CD4-positive, alpha-beta memory T cell (primary cell): ENCODE measurements at regions of chr2 and their contacts with region 1.

Region 1: GRCh38 chr2:238060542-238061314 is at the start of gene SCLY:
- DNase-seq: peak; percentile 92 to 96 (median 95)
- H3K4me3 ChIP-seq: peak within 1 kb of the TSS; percentile 76 to 95
- H3K4me3 Mint-ChIP-seq: peak within 1 kb of the TSS; percentile 85 to 97 (median 93)
- H3K27ac ChIP-seq: peak within 1 kb of the TSS; percentile 76
- H3K27ac Mint-ChIP-seq: peak within 1 kb of the TSS; percentile 87 to 97 (median 93)
- H3K4me1 ChIP-seq: peaks cover 35% of the 10 kb centered on the region
- H3K4me1 Mint-ChIP-seq: peaks cover 22 to 59% (median 38%) of the 10 kb centered on the region in 4 donors
- H3K27me3 ChIP-seq: no peaks in the 10 kb centered on the region
- H3K27me3 Mint-ChIP-seq: peaks cover 12 to 14% of the 10 kb centered on the region in 2 donors
- total RNA-seq, gene SCLY: 35.9 to 37.9 TPM

Region 2: DNA sequence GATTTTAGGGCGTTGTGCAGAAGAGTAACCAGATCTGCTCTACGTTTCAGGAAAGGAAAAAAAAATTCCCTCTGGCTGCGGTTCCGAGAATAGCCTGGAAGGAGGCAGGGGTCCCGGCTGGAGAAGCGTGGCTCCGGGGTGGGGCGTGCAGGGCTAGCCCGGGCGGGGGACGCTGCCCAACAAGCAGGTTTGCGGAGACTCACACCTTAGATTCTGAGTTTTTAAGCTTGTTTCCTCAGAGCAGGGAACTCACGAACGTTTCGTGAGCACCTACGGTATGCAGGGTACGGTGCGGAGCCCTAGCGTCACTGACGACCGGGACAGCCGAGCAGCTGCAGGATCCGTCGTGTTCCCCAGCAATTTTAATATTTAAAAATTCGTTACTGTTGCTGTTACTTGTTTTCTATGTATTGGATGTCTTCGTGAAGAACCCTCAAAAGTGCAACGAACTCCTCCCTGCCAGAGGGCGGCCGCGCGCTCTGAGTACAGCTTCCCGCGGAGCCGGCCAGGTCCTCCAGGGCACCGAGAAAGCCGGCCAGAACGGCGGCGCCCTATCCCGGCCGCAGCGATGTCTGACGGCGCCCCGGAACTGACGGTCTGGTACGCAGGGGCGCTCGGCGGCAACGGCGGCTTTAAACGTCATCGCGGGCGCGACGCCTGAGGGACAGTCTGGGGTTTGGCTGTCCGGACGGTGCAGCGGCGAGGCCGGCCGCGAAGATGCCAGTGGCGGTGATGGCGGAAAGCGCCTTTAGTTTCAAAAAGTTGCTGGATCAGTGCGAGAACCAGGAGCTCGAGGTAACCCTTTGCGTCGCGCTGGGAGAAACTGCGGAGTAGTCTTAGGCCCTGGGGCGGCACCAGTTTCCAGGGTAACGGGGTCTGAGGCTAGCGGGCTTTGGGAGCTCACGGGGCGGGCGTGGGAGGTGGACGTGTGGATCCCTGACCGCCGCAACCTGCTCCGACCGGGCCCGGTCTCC is 975.2 kb before region 1 on chr2 and contains the start of gene COPS8:
- CTCF ChIA-PET with region 1: interaction called, 3 read pairs
- POLR2A ChIA-PET with region 1: no interaction called
- intact Hi-C with region 1: loop called (anchors 5 kb)
- DNase-seq: peak; percentile 88 to 91 (median 91)
- H3K4me3 ChIP-seq: peak within 1 kb of the TSS; percentile 48 to 79
- H3K4me3 Mint-ChIP-seq: peak within 1 kb of the TSS; percentile 99 to 100 (median 99)
- H3K27ac ChIP-seq: peak within 1 kb of the TSS; percentile 81
- H3K27ac Mint-ChIP-seq: peak within 1 kb of the TSS; percentile 97 to 100 (median 100)
- H3K4me1 ChIP-seq: peaks cover 16% of the 10 kb centered on the region
- H3K4me1 Mint-ChIP-seq: peaks cover 9 to 30% (median 16%) of the 10 kb centered on the region in 4 donors
- H3K27me3 ChIP-seq: no peaks in the 10 kb centered on the region
- H3K27me3 Mint-ChIP-seq: peaks cover 0 to 1% of the 10 kb centered on the region in 2 donors
- total RNA-seq, gene COPS8: 33.4 to 34.5 TPM

Region 3: GRCh38 chr2:237691908-237692600 is 368.7 kb before region 1 on chr2:
- CTCF ChIA-PET with region 1: no interaction called
- POLR2A ChIA-PET with region 1: interaction called, 4 read pairs
- intact Hi-C with region 1: loop called (anchors 5 kb)
- DNase-seq: peak; percentile 91 to 94 (median 93)
- H3K4me3 ChIP-seq: peak overlapping the region; percentile 79 to 89
- H3K4me3 Mint-ChIP-seq: peak overlapping the region; percentile 90 to 97 (median 93)
- H3K27ac ChIP-seq: peak overlapping the region; percentile 96
- H3K27ac Mint-ChIP-seq: peak overlapping the region; percentile 93 to 99 (median 97)
- H3K4me1 ChIP-seq: peaks cover 76% of the 10 kb centered on the region
- H3K4me1 Mint-ChIP-seq: peaks cover 55 to 82% (median 69%) of the 10 kb centered on the region in 4 donors
- H3K27me3 ChIP-seq: no peaks in the 10 kb centered on the region
- H3K27me3 Mint-ChIP-seq: no peaks in the 10 kb centered on the region

Region 4: DNA sequence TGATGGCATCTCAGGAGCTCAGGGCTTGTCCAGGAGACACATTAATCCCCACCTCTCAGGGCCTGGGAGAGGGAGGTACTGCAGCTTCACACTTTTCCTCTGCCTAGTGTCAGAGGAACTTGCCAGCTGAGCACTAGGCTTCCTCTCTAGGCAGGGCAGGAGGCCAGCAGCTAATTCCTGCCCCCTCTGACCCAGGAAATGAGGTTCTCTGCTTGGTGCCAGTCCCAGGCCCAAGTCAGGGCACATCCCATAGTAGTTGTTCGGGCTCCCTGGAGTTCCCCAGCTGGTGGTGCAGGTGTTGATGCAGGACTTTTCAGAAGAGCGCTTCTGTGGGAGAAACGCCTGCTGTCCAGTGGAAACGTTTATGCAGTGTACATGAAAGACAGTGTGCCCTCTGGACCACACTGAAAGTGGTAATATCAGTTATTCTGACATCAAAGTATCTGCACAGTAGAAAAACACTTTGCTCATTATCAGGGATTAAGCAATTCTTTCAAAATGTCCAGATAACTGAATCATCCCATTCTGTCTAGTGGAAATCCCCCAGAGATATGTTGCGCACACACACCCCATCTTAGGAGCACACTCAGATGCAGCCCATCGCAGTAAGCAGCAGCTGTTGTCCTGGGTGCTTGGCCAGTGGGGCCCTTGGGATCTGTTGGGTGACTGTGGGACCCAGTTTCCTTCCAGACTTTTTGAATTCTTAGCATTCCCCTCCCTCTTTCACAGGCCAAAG is 17.7 kb before region 1 on chr2:
- CTCF ChIA-PET with region 1: no interaction called
- POLR2A ChIA-PET with region 1: interaction called, 3 read pairs
- intact Hi-C with region 1: loop called (anchors 2 kb)
- DNase-seq: no peak
- H3K4me3 ChIP-seq: no peak overlapping the region
- H3K4me3 Mint-ChIP-seq: peak overlapping the region in 1 of 8 donors; percentile 48
- H3K27ac ChIP-seq: no peak overlapping the region
- H3K27ac Mint-ChIP-seq: peak overlapping the region in 2 of 7 donors; percentile 13 to 23
- H3K4me1 ChIP-seq: no peaks in the 10 kb centered on the region
- H3K4me1 Mint-ChIP-seq: peaks cover 0 to 7% (median 4%) of the 10 kb centered on the region in 4 donors
- H3K27me3 ChIP-seq: no peaks in the 10 kb centered on the region
- H3K27me3 Mint-ChIP-seq: no peaks in the 10 kb centered on the region

Region 5: GRCh38 chr2:238203094-238203972 is 142.6 kb after region 1 on chr2 and contains the start of gene ILKAP:
- CTCF ChIA-PET with region 1: no interaction called
- POLR2A ChIA-PET with region 1: interaction called, 6 read pairs
- intact Hi-C with region 1: loop called (anchors 1 kb)
- DNase-seq: peak; percentile 88 to 93 (median 91)
- H3K4me3 ChIP-seq: peak within 1 kb of the TSS; percentile 30 to 72
- H3K4me3 Mint-ChIP-seq: peak within 1 kb of the TSS; percentile 87 to 94 (median 91)
- H3K27ac ChIP-seq: peak within 1 kb of the TSS; percentile 79
- H3K27ac Mint-ChIP-seq: peak within 1 kb of the TSS; percentile 89 to 97 (median 94)
- H3K4me1 ChIP-seq: peaks cover 48% of the 10 kb centered on the region
- H3K4me1 Mint-ChIP-seq: peaks cover 28 to 46% (median 36%) of the 10 kb centered on the region in 4 donors
- H3K27me3 ChIP-seq: no peaks in the 10 kb centered on the region
- H3K27me3 Mint-ChIP-seq: no peaks in the 10 kb centered on the region
- total RNA-seq, gene ILKAP: 78.2 to 87.8 TPM

Region 6: GRCh38 chr2:238231251-238231793 is 170.6 kb after region 1 on chr2:
- CTCF ChIA-PET with region 1: no interaction called
- POLR2A ChIA-PET with region 1: interaction called, 3 read pairs
- intact Hi-C with region 1: loop called (anchors 2 kb)
- DNase-seq: peak; percentile 44 to 83 (median 78)
- H3K4me3 ChIP-seq: peak overlapping the region; percentile 20 to 55
- H3K4me3 Mint-ChIP-seq: peak overlapping the region; percentile 75 to 92 (median 80)
- H3K27ac ChIP-seq: no peak overlapping the region
- H3K27ac Mint-ChIP-seq: peak overlapping the region in 6 of 7 donors; percentile 7 to 72 (median 50)
- H3K4me1 ChIP-seq: peaks cover 16% of the 10 kb centered on the region
- H3K4me1 Mint-ChIP-seq: peaks cover 13 to 47% (median 21%) of the 10 kb centered on the region in 4 donors
- H3K27me3 ChIP-seq: peaks cover 3% of the 10 kb centered on the region
- H3K27me3 Mint-ChIP-seq: peaks cover 16 to 23% of the 10 kb centered on the region in 2 donors